ENCODE measurements at regions of chr9 and their contacts with region 1.

Region 1: DNA sequence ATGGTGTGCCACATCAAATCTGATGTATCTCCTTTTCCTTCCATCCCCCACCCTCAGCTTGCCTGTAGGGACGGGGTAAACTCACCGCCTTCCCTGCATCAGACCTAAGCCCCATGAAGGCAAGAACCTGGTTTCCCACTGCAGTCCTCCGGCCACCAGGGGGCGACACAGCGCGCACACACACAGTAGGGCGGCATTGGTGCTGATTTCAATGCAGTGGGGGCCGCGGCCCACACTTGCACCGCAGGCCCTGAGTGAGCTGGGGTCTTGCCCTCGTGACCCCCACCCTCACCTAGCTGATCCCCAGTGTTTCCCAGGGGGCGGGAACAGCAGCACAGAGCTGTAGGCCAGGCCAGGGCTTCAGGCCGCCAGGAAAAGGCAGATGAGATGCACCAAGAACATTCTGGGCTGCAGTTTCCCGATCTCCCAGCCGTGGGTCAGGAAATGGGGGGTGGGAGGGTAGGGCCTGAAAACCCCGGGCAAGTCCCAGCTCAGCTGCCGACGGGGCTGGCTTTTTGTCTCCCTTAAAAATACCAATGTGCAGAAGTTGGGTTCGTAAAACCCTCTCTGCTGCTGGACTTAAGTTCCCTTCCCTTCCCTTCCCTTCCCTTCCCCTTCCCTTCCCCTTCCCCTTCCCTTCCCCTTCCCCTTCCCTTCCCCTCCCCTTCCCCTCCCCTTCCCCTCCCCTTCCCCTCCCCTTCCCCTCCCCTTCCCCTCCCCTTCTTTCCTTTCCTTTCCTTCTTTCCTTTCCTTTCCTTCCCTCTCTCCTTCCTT is 19.5 kb downstream of the FAM163B start:
- DNase-seq: peak; percentile 79
- ATAC-seq: peak; percentile 72
- H3K4me3 Mint-ChIP-seq: no peak overlapping the region
- H3K27ac Mint-ChIP-seq: no peak overlapping the region
- H3K4me1 Mint-ChIP-seq: peaks cover 3% of the 10 kb centered on the region
- H3K27me3 Mint-ChIP-seq: peaks cover 8% of the 10 kb centered on the region

Region 2: GRCh38 chr9:133610845-133611569 is 21.4 kb after region 1 on chr9:
- CTCF ChIA-PET with region 1: no interaction called
- POLR2A ChIA-PET with region 1: no interaction called
- intact Hi-C with region 1: no loop called
- DNase-seq: no peak
- ATAC-seq: no peak
- H3K4me3 Mint-ChIP-seq: no peak overlapping the region
- H3K27ac Mint-ChIP-seq: no peak overlapping the region
- H3K4me1 Mint-ChIP-seq: no peaks in the 10 kb centered on the region
- H3K27me3 Mint-ChIP-seq: peaks cover 16% of the 10 kb centered on the region

Region 3: DNA sequence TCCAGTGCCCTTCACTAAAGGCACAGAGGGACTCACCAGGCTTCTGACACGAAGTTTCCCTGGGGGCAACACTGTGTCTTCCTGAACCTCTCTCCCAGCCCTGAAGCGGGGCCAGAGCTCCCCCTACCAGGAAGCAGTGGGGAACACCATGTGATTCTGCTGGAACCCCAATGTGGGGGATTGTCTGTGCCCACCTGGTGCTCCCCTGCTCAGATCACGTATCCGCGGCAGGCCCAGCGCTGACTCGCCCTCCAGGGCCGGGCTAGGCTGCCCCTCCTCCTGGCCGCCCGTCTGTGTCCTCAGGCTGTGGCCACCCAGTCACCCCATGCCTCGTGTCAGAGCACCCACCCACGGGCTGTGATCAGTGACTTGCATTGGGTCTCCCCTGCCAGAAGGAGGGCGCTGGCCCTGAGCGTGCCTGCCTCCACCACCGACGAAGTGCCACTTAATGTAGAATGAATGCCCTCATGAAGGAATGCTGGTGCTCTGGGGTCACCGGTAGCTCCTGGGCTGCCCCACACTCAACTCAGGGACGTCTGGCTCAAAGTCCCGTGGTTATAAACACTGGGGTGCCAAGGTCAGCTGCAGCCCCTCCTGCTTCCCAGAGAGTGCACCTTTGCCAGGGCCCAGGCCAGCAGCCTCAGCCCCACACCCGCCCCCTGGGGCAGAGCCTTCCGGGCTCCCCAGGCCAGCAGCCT is 126.4 kb after region 1 on chr9:
- CTCF ChIA-PET with region 1: interaction called, 3 read pairs
- POLR2A ChIA-PET with region 1: no interaction called
- intact Hi-C with region 1: loop called in 1 of 2 experiments (anchors 1 kb)
- DNase-seq: peak; percentile 53
- ATAC-seq: peak; percentile 72
- H3K4me3 Mint-ChIP-seq: no peak overlapping the region
- H3K27ac Mint-ChIP-seq: no peak overlapping the region
- H3K4me1 Mint-ChIP-seq: peaks cover 3% of the 10 kb centered on the region
- H3K27me3 Mint-ChIP-seq: no peaks in the 10 kb centered on the region

Region 4: DNA sequence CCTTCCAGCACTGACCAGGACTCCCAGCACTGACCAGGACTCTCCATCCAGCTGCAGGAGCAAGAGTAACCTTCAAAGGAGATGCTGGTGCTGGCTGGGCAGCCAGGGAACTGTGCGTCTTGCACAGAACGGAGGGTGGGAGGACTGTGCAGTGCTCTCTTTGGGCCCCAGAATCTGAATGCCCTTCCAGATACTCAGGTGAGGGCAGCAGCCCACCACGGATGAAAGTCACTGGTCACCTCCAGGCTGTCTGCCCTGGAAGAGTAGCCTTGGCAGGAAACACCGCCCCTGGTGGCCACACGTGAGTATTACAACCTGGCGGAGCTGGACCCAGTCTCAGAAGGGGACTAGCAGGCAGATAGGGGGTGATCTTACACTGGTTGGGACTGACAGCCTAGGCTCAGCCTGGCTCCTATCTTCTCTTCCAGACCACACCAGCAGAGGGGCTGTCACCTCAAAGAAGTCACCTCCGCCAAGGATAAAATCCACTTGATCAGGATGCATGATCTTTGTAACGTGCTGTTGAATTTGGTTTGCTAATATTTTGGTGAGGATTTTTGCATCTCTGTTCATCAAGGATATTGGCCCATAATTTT is 153.3 kb after region 1 on chr9:
- CTCF ChIA-PET with region 1: interaction called, 10 read pairs
- POLR2A ChIA-PET with region 1: no interaction called
- intact Hi-C with region 1: no loop called
- DNase-seq: peak; percentile 86
- ATAC-seq: peak; percentile 79
- H3K4me3 Mint-ChIP-seq: no peak overlapping the region
- H3K27ac Mint-ChIP-seq: no peak overlapping the region
- H3K4me1 Mint-ChIP-seq: peaks cover 7% of the 10 kb centered on the region
- H3K27me3 Mint-ChIP-seq: no peaks in the 10 kb centered on the region

Region 5: GRCh38 chr9:133930682-133931485 is 341.2 kb after region 1 on chr9:
- CTCF ChIA-PET with region 1: no interaction called
- POLR2A ChIA-PET with region 1: no interaction called
- intact Hi-C with region 1: no loop called
- DNase-seq: no peak
- ATAC-seq: no peak
- H3K4me3 Mint-ChIP-seq: no peak overlapping the region
- H3K27ac Mint-ChIP-seq: no peak overlapping the region
- H3K4me1 Mint-ChIP-seq: no peaks in the 10 kb centered on the region
- H3K27me3 Mint-ChIP-seq: no peaks in the 10 kb centered on the region